BJ (cell line): ENCODE measurements at regions of chr7 and their contacts with region 1.

Region 1: GRCh38 chr7:38215735-38216670 is 38.0 kb downstream of the STARD3NL start:
- DNase-seq: peak; percentile 43
- H3K4me3 ChIP-seq: no peak overlapping the region
- H3K27me3 ChIP-seq: no peaks in the 10 kb centered on the region
- CTCF ChIP-seq: peak; percentile 98

Region 2: GRCh38 chr7:38107486-38107893 is 108.5 kb before region 1 on chr7:
- CTCF ChIA-PET with region 1: interaction called, 82 read pairs
- POLR2A ChIA-PET with region 1: interaction called, 7 read pairs
- DNase-seq: no peak
- H3K4me3 ChIP-seq: no peak overlapping the region
- H3K27me3 ChIP-seq: peaks cover 6% of the 10 kb centered on the region; the same call in 1 of the 2 replicates
- CTCF ChIP-seq: peak; percentile 73

Region 3: GRCh38 chr7:38186593-38187314 is 29.2 kb before region 1 on chr7:
- CTCF ChIA-PET with region 1: interaction called, 24 read pairs
- POLR2A ChIA-PET with region 1: no interaction called
- DNase-seq: no peak
- H3K4me3 ChIP-seq: no peak overlapping the region
- H3K27me3 ChIP-seq: no peaks in the 10 kb centered on the region
- CTCF ChIP-seq: no peak

Region 4: DNA sequence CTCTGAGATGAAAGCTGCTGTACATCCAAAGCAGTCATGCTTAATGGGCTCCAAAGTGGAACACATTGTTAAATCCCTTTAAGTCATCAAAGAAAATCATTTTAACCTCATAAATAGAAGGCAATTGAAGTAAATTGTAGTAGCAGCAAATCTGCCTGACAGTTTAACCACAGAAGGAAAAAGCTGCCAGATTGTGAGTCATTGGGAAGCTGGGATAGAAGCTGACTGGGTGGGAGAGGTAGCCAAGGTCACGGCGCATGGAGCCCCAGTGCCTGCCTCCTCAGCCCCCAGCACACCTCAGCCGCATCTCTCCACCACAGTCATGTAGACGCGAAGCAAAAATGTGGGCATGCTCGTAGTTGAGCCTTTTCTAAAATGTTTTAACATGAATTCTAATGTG is 13.4 kb after region 1 on chr7:
- CTCF ChIA-PET with region 1: interaction called, 17 read pairs
- POLR2A ChIA-PET with region 1: no interaction called
- DNase-seq: no peak
- H3K4me3 ChIP-seq: no peak overlapping the region
- H3K27me3 ChIP-seq: no peaks in the 10 kb centered on the region
- CTCF ChIP-seq: no peak

Region 5: DNA sequence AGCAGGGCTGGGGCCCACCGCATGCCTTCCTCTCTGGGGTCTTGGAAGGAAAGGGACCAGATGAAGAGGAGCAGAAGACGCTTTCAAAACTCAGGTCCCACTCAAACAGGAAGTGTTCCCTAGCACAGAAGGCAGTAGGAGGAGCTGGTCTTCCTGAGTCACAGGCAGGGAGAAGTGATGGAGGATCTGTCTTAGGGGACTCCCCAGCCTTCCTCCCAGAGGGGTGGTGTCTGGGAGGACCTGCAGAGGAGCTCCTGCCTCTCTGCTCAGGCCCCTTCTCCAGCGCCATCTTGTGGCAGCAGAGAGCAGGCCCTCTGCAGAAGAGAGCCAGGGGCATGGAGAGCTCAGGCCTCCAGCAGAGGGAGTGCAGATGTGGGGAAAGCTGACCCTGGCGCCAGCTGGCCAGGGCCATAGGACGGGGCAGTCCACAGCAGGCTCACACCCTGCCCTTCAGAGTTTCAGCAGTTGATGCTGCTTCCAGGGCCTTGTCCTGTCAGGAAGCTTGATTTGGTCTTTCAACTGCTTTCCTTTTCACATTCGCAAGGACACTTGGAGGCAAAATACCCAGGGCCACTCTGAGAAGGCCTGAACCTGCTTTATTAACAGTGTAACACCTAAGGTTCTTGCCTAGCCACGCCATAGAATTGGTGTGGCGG is 119.6 kb after region 1 on chr7:
- CTCF ChIA-PET with region 1: interaction called, 49 read pairs
- POLR2A ChIA-PET with region 1: no interaction called
- DNase-seq: peak; percentile 25
- H3K4me3 ChIP-seq: no peak overlapping the region
- H3K27me3 ChIP-seq: no peaks in the 10 kb centered on the region
- CTCF ChIP-seq: peak; percentile 100

Region 6: GRCh38 chr7:38481401-38481800 is 265.4 kb after region 1 on chr7:
- CTCF ChIA-PET with region 1: no interaction called
- POLR2A ChIA-PET with region 1: no interaction called
- DNase-seq: no peak
- H3K4me3 ChIP-seq: no peak overlapping the region
- H3K27me3 ChIP-seq: no peaks in the 10 kb centered on the region
- CTCF ChIP-seq: no peak